Posterior cingulate gyrus (tissue), 11 donors: ENCODE measurements at regions of chr6 and their contacts with region 1.

Region 1: GRCh38 chr6:50128420-50129005 is 78.8 kb upstream of the DEFB112 start:
- DNase-seq: no peak

Region 2: DNA sequence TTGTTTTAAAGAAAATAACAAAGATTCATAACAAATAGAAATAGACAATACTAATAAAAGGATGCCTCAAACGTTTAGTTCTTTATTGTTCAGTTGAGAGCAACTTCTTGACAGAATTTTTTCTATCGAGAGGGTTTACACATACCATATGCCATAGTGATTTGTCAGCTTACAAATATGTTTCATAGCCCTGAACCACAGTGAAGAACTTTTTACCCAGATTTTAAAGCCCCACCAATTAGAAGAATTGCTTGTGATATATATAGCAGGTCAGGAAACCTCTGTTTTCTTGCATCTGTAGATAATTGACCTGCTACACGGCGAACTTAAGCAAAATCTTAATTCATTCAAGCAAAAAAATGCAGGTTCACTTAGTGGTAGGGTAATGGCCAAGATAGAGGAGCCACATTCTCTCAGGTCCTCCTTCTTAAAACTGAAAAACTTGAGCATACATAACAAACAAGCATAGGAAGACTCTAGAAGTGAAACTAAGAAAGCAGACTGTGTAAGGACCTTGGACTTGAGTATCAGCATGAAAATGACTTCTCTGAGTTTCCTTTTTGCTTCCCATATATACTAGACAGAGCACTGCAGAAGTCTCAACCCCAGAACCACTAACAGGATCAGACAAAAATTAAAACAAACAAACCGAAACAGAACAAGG is 301.6 kb before region 1 on chr6:
- intact Hi-C with region 1: no loop called
- DNase-seq: no peak

Region 3: DNA sequence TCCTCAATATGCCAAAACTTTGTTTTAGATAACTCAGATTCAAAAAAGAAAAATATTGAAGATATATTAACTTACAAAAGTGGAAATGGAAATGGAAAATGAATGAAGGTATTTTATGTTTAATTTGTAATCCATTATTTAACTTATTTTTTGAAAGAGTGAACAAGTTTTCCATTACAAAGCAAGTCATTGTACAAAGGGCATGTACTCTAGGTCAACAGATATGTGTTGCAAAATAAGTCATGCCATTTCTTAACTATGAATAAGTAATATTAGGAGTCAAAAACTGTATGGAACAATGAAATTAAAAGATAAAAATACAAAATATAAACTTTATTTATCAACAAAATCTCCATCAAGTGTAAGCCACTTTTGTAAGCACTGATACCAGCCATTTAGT is 133.2 kb before region 1 on chr6:
- intact Hi-C with region 1: no loop called
- DNase-seq: no peak

Region 4: DNA sequence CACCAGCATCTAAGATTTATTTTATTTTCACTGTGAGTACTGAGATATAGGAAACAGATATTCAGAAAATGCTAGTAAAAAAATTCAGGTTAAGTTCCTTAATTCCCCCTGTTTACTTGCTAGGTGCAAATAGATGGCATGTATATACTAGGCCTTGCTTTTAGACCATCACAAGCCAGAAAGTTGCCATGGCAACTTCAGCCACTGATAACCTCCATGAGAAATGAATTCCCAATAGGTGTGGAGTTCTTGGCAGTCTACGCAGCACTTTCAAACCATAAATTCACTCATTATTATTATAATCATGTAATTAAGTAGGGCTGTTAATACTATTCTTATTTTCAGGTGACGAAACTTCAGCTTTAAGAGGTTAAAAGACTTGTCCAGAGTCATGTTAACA is 333.2 kb after region 1 on chr6:
- intact Hi-C with region 1: no loop called
- DNase-seq: no peak

Region 5: DNA sequence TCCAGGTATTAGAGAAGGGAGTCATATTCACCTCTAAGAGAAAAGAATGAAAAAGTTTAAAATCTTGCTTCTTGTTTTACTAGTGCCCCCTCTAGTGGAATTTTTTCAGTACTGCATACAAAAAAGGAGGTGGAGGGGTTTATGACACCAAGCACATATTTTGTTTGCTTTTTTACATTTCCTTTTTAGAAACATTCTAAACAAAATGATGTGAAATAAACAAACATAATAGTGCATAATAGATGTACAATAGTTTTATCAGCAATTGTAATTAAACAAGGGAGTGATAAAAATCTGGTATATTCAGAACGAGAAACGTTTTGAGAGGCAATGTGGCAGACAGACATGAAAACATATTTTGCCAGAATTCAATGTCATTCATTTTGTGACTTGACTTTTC is 473.8 kb after region 1 on chr6:
- intact Hi-C with region 1: loop called (anchors 2 kb)
- DNase-seq: no peak

Region 6: GRCh38 chr6:50791900-50792508 is 663.5 kb after region 1 on chr6:
- intact Hi-C with region 1: loop called (anchors 5 kb)
- DNase-seq: no peak